Endothelial cell of umbilical vein (primary cell): ENCODE measurements at regions of chr11 and their contacts with region 1.

Region 1: DNA sequence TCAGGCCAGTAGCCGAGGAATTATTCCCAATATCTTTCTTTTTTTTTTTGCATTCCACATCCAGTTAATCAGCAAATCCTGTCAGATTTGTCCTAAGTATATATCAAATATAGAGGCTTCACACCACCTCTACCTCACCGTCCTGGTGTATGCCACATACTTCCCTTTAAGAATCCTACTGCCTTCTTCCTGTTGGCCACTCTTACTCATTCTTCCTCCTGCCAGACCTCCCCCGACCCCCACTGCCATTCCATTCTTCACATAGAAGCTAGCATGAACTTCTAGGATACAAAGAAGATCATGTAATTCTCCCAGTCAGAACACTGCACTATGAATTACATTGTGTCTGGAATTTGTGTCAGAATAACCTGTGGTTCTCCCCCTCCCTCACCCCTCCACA is 89.5 kb downstream of the TRIM44 start:
- DNase-seq: peak; percentile 53
- H3K4me3 ChIP-seq: no peak overlapping the region
- H3K27ac ChIP-seq: peak overlapping the region; percentile 42
- H3K4me1 ChIP-seq: peaks cover 22% of the 10 kb centered on the region
- H3K27me3 ChIP-seq: no peaks in the 10 kb centered on the region
- CTCF ChIP-seq: no peak
- POLR2A ChIP-seq: peak; percentile 29

Region 2: DNA sequence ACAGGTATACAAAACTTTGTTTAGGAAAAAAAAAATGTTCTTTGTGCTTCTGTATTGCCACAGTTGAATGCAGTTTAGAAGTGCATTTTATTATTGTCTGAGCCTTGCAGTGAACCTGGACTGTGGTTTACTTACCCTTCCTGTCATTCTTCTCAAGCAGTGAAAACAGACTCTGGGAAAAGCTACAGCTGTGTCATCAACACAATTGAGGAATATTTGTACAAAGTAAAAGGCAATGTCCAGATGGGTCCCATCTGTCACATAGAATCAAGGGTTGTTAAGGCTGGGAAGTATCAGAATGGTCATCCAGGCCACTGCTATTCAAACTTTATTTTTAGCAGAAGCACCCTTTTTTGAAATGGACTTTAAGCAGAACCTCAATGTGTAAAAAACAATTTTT is 16.2 kb before region 1 on chr11:
- CTCF ChIA-PET with region 1: interaction called, 3 read pairs
- POLR2A ChIA-PET with region 1: no interaction called
- dilution Hi-C with region 1: no loop called
- intact Hi-C with region 1: loop called (anchors 2 kb)
- DNase-seq: peak; percentile 78
- H3K4me3 ChIP-seq: no peak overlapping the region
- H3K27ac ChIP-seq: peak overlapping the region; percentile 73
- H3K4me1 ChIP-seq: peaks cover 25% of the 10 kb centered on the region
- H3K27me3 ChIP-seq: no peaks in the 10 kb centered on the region
- CTCF ChIP-seq: no peak
- POLR2A ChIP-seq: no peak

Region 3: DNA sequence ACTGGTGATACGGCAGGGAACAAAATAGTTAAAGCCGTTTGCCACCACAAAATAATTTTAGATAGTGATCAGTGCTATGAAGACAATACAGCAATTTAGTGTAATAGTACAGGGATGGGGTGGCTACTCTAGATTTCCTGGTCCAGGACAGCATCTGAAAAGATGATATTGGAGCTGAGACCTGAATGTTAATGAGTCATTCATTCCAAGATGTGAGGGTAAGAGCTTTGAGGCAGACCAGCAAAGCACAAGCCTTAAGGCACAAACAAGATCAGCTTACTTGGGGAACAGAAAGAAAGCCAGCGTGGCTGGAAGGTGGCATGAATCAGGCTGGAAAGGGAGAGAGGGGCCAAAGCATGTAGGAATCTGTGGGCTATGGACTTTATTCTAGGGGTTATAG is 42.7 kb after region 1 on chr11:
- CTCF ChIA-PET with region 1: interaction called, 3 read pairs
- POLR2A ChIA-PET with region 1: no interaction called
- dilution Hi-C with region 1: no loop called
- intact Hi-C with region 1: loop called (anchors 1 kb)
- DNase-seq: no peak
- H3K4me3 ChIP-seq: no peak overlapping the region
- H3K27ac ChIP-seq: no peak overlapping the region
- H3K4me1 ChIP-seq: peaks cover 45% of the 10 kb centered on the region
- H3K27me3 ChIP-seq: no peaks in the 10 kb centered on the region
- CTCF ChIP-seq: no peak
- POLR2A ChIP-seq: no peak

Region 4: DNA sequence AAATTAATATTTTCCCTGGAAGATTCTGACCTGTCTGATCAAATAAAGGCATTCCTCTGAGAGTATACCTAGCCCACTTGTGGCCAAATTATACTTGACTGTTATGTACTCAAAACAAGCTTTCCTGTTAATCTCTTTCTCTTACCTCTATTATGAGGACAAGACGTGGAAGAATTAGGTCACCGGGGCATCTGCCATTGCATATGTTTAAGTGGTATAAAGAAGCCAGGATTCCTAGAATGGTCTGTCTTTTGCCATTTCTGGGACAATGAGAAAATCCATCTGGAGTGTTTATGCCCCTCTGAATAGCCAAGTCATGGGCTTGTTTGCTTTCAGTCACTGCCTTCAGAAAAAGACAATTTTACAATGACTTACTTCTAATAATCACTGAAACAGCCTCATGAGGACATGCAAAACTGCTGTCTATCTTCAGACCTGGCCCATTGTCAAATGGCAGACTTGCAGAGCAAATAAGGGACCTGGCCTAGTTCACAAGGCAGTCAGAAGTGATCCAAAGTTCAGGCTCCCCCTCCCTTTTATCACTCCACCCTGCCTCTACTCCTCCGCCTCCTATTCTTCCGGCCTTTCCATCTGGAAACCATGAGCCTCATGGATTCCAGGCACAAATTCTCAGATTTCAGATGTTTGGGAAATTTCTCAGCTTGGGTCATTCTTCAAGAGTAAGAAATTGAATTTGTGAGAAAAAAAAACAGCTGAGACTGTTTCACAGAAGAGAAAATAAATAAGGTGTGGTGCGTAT is 63.6 kb after region 1 on chr11:
- CTCF ChIA-PET with region 1: no interaction called
- POLR2A ChIA-PET with region 1: no interaction called
- dilution Hi-C with region 1: no loop called
- intact Hi-C with region 1: no loop called
- DNase-seq: no peak
- H3K4me3 ChIP-seq: no peak overlapping the region
- H3K27ac ChIP-seq: no peak overlapping the region
- H3K4me1 ChIP-seq: no peaks in the 10 kb centered on the region
- H3K27me3 ChIP-seq: no peaks in the 10 kb centered on the region
- CTCF ChIP-seq: no peak
- POLR2A ChIP-seq: no peak

Region 5: GRCh38 chr11:36015799-36016198 is 263.7 kb after region 1 on chr11:
- CTCF ChIA-PET with region 1: no interaction called
- POLR2A ChIA-PET with region 1: no interaction called
- dilution Hi-C with region 1: no loop called
- intact Hi-C with region 1: no loop called
- DNase-seq: no peak
- H3K4me3 ChIP-seq: no peak overlapping the region
- H3K27ac ChIP-seq: no peak overlapping the region
- H3K4me1 ChIP-seq: peaks cover 12% of the 10 kb centered on the region
- H3K27me3 ChIP-seq: no peaks in the 10 kb centered on the region
- CTCF ChIP-seq: no peak
- POLR2A ChIP-seq: no peak

Region 6: DNA sequence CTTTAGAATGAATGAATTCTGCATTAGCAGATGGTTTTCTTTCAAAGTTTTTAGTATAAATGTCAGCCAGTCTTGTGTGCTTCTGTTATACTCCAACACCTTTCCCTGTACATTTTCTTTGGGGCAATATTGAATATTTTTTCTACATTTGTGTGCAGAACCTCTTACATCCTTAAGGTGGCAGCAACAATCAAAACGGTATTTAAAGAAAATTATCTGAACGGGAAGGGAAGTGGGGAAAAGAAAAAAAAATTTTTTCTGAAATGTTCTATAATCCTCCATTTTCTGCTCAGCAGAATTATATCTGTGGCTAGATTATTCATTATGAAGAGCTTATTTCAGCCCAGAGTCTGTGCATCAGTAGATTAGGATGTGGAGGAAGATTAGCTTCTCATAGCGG is 1193.3 kb after region 1 on chr11:
- CTCF ChIA-PET with region 1: no interaction called
- POLR2A ChIA-PET with region 1: no interaction called
- dilution Hi-C with region 1: no loop called
- intact Hi-C with region 1: no loop called
- DNase-seq: no peak
- H3K4me3 ChIP-seq: no peak overlapping the region
- H3K27ac ChIP-seq: no peak overlapping the region
- H3K4me1 ChIP-seq: no peaks in the 10 kb centered on the region
- H3K27me3 ChIP-seq: no peaks in the 10 kb centered on the region
- CTCF ChIP-seq: peak in 1 of 2 donors; percentile 16
- POLR2A ChIP-seq: no peak